ENCODE measurements at regions of chr4 and their contacts with region 1.

Region 1: GRCh38 chr4:150960818-150961217 is 54.3 kb downstream of the LRBA start:
- DNase-seq: no peak

Region 2: GRCh38 chr4:150874338-150875226 is 86.2 kb before region 1 on chr4:
- intact Hi-C with region 1: loop called (anchors 5 kb)
- DNase-seq: peak; percentile 80

Measured in cardiac septum (tissue), 1 donor.